Mammary epithelial cell (primary cell): ENCODE measurements at regions of chr1 and their contacts with region 1.

Region 1: GRCh38 chr1:187051618-187052232 is 223.0 kb downstream of the PLA2G4A start:
- DNase-seq: peak; percentile 31
- H3K4me3 ChIP-seq: no peak overlapping the region
- H3K27ac ChIP-seq: no peak overlapping the region
- H3K4me1 ChIP-seq: no peaks in the 10 kb centered on the region
- H3K27me3 ChIP-seq: peaks cover 3% of the 10 kb centered on the region
- CTCF ChIP-seq: peak; percentile 22 to 55

Region 2: DNA sequence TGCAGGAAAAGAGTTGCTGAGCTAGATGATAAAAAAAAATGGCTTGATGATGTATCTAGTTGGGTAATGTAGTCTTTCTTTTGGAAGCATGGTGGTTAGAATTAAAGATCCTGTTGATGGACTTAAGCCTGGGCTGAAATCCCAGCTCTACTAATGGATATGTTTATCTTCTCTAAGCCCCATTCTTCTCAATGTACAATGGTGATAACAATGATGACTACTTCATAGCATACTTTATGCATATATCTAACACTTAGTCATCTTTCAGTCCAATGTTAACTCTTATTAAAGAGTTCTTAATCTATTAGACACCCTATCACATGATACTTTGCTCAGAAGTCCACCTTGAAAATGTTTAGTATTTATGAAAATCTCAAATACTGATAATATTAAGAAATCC is 33.4 kb before region 1 on chr1:
- CTCF ChIA-PET with region 1: no interaction called
- dilution Hi-C with region 1: no loop called
- in situ Hi-C with region 1: no loop called
- intact Hi-C with region 1: no loop called
- DNase-seq: no peak
- H3K4me3 ChIP-seq: no peak overlapping the region
- H3K27ac ChIP-seq: no peak overlapping the region
- H3K4me1 ChIP-seq: no peaks in the 10 kb centered on the region
- H3K27me3 ChIP-seq: peaks cover 2% of the 10 kb centered on the region
- CTCF ChIP-seq: no peak

Region 3: DNA sequence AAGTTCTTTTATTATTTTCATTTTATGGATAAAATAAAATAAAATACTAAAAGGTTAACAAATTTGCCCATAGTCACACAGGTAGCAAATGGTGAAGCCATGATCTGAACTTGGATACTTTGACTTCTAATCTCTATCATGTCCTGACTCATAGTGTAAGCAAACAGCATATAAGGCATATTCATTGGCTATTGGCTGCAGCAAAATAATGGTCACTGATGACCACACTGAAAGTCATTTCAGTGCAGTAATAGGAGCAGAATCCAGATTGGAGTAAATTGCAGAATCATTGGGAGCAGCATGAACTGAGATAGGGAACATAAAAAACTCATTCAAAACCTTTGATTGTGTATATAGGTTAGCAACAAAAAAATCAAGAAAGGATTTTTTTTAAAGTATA is 39.9 kb after region 1 on chr1:
- CTCF ChIA-PET with region 1: no interaction called
- dilution Hi-C with region 1: no loop called
- in situ Hi-C with region 1: no loop called
- intact Hi-C with region 1: no loop called
- DNase-seq: no peak
- H3K4me3 ChIP-seq: no peak overlapping the region
- H3K27ac ChIP-seq: no peak overlapping the region
- H3K4me1 ChIP-seq: no peaks in the 10 kb centered on the region
- H3K27me3 ChIP-seq: no peaks in the 10 kb centered on the region
- CTCF ChIP-seq: no peak

Region 4: GRCh38 chr1:187413405-187414182 is 361.9 kb after region 1 on chr1:
- CTCF ChIA-PET with region 1: no interaction called
- dilution Hi-C with region 1: no loop called
- in situ Hi-C with region 1: no loop called
- intact Hi-C with region 1: loop called (anchors 5 kb)
- DNase-seq: no peak
- H3K4me3 ChIP-seq: no peak overlapping the region
- H3K27ac ChIP-seq: no peak overlapping the region
- H3K4me1 ChIP-seq: peaks cover 3% of the 10 kb centered on the region
- H3K27me3 ChIP-seq: no peaks in the 10 kb centered on the region
- CTCF ChIP-seq: peak; percentile 6 to 49